Caco-2 (cell line): ENCODE measurements at regions of chr17 and their contacts with region 1.

Region 1: GRCh38 chr17:75679706-75680442 is 12.7 kb downstream of the SAP30BP start:
- DNase-seq: peak; percentile 30 to 58
- H3K4me3 ChIP-seq: no peak overlapping the region
- H3K4me3 Mint-ChIP-seq: peak overlapping the region; percentile 4
- H3K27ac Mint-ChIP-seq: peak overlapping the region; percentile 27
- H3K4me1 ChIP-seq: peaks cover 18% of the 10 kb centered on the region
- H3K4me1 Mint-ChIP-seq: peaks cover 23% of the 10 kb centered on the region
- H3K27me3 ChIP-seq: no peaks in the 10 kb centered on the region
- H3K27me3 Mint-ChIP-seq: no peaks in the 10 kb centered on the region
- CTCF ChIP-seq: peak; percentile 16 to 30

Region 2: GRCh38 chr17:75261336-75262111 is 418.4 kb before region 1 on chr17 and contains the starts of genes GGA3 and MRPS7:
- CTCF ChIA-PET with region 1: no interaction called
- POLR2A ChIA-PET with region 1: interaction called, 14 read pairs
- intact Hi-C with region 1: no loop called
- DNase-seq: peak; percentile 95 to 97
- H3K4me3 ChIP-seq: peak within 1 kb of the TSS; percentile 89
- H3K4me3 Mint-ChIP-seq: peak within 1 kb of the TSS; percentile 97
- H3K27ac Mint-ChIP-seq: peak within 1 kb of the TSS; percentile 100
- H3K4me1 ChIP-seq: no peaks in the 10 kb centered on the region
- H3K4me1 Mint-ChIP-seq: peaks cover 28% of the 10 kb centered on the region
- H3K27me3 ChIP-seq: no peaks in the 10 kb centered on the region
- H3K27me3 Mint-ChIP-seq: no peaks in the 10 kb centered on the region
- CTCF ChIP-seq: no peak
- total RNA-seq, gene GGA3: 90.2 and 94.4 TPM in 2 replicates
- total RNA-seq, gene MRPS7: 123 and 125 TPM in 2 replicates